ENCODE measurements at regions of chr16 and their contacts with region 1.

Region 1: DNA sequence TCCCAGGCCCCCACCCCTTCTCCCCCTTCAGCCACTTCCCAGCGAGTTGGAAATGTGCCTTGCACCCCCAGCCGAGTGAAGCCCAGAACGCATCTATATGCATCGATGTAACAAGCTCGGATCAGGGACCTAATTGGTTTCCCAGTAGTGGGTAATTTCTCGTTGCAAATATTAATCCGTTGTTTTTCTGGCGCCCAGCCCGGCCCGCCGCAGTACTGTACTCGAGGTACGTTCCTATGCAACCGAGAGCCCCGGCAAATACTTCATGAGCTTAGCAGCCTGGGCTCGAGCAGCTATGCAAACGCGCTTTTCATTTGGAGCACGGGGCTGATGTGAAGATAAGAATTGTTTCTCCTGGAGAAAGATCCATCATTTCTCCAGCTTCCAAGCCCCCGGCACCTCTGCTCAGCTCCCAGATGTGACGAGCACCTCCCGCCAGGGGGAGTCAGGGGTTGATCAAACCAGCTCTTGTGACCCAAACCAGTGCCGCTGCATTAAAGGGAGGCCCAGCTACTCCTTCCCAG is 229.8 kb downstream of the KATNIP start:
- DNase-seq: peak; percentile 46
- ATAC-seq: peak; percentile 88
- H3K4me3 ChIP-seq: no peak overlapping the region
- H3K27ac ChIP-seq: no peak overlapping the region
- H3K4me1 ChIP-seq: no peaks in the 10 kb centered on the region
- H3K27me3 ChIP-seq: no peaks in the 10 kb centered on the region
- CTCF ChIP-seq: peak; percentile 53
- POLR2A ChIP-seq: no peak
- RAD21 ChIP-seq: peak; percentile 53

Region 2: DNA sequence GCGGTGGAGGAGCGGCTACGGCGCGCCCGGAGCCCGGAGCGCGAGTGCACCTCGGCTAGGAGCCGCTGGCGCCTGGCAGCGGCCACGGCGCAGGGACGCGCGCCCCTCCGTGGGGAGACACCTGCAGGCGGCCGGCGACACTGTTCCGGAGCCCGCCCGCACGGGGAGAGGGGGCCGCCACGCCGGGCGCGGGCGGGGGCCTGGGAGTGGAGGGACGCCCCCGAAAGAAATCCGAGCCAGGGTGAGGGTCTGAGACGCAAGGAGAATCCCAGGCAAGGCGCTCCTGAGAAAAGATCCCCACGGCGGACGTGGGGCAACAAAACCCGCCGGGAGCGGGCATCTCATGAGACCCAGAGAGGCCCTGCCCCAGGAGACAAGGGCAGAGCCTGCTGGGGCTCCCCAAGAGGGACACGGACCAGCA is 283.9 kb after region 1 on chr16 and contains the start of gene GSG1L:
- CTCF ChIA-PET with region 1: interaction called, 4 read pairs
- POLR2A ChIA-PET with region 1: no interaction called
- dilution Hi-C with region 1: no loop called
- in situ Hi-C with region 1: loop called (anchors 10 kb)
- intact Hi-C with region 1: no loop called
- DNase-seq: no peak
- ATAC-seq: peak; percentile 22; the same call in 1 of the 2 replicates
- H3K4me3 ChIP-seq: no peak within 1 kb of the TSS
- H3K27ac ChIP-seq: no peak within 1 kb of the TSS
- H3K4me1 ChIP-seq: no peaks in the 10 kb centered on the region
- H3K27me3 ChIP-seq: peaks cover 73% of the 10 kb centered on the region
- CTCF ChIP-seq: peak; percentile 14; the same call in 1 of the 2 replicates
- POLR2A ChIP-seq: no peak
- RAD21 ChIP-seq: no peak
- total RNA-seq, gene GSG1L: not detected in 2 replicates